ENCODE measurements at regions of chr1 and their contacts with region 1.

Region 1: GRCh38 chr1:115706587-115707425 is 61.7 kb downstream of the CASQ2 start:
- DNase-seq: peak; percentile 30
- H3K4me3 ChIP-seq: no peak overlapping the region
- H3K27ac ChIP-seq: no peak overlapping the region
- H3K4me1 ChIP-seq: peaks cover 5% of the 10 kb centered on the region
- H3K27me3 ChIP-seq: no peaks in the 10 kb centered on the region
- CTCF ChIP-seq: peak; percentile 42 to 70

Region 2: GRCh38 chr1:114467488-114467887 is 1239.3 kb before region 1 on chr1:
- CTCF ChIA-PET with region 1: interaction called, 11 read pairs
- dilution Hi-C with region 1: no loop called
- in situ Hi-C with region 1: no loop called
- intact Hi-C with region 1: no loop called
- DNase-seq: no peak
- H3K4me3 ChIP-seq: no peak overlapping the region
- H3K27ac ChIP-seq: no peak overlapping the region
- H3K4me1 ChIP-seq: peaks cover 18% of the 10 kb centered on the region
- H3K27me3 ChIP-seq: no peaks in the 10 kb centered on the region
- CTCF ChIP-seq: no peak

Region 3: GRCh38 chr1:115642168-115643072 is 64.4 kb before region 1 on chr1:
- CTCF ChIA-PET with region 1: no interaction called
- dilution Hi-C with region 1: no loop called
- in situ Hi-C with region 1: no loop called
- intact Hi-C with region 1: loop called (anchors 2 kb)
- DNase-seq: peak; percentile 70
- H3K4me3 ChIP-seq: peak overlapping the region; percentile 61 to 88 (median 67)
- H3K27ac ChIP-seq: peak overlapping the region; percentile 50
- H3K4me1 ChIP-seq: peaks cover 14% of the 10 kb centered on the region
- H3K27me3 ChIP-seq: no peaks in the 10 kb centered on the region
- CTCF ChIP-seq: peak; percentile 8 to 35

Region 4: DNA sequence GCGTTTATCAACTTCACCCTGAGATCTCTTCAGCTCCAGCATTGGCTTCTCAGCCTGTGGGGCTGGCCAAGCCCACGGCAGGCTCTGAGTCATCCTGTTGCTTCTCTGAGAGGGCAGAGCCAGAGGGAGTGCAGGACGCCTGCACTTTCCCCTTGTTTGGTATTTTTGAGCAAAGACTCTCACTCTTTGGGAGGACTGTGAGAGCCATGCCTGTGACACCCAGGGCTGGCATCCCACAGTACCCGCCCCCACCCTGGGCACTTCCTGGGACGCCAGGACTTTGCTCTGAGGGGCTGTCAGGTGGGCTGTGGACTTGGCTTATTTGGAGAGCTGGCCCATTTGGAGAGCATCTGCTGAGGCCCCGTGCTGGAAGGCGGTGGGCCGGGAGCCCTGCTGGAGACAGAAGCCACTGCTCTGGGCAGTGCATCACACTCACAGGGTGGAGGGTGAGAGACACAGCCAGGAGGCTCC is 27.6 kb before region 1 on chr1:
- CTCF ChIA-PET with region 1: interaction called, 24 read pairs
- dilution Hi-C with region 1: no loop called
- in situ Hi-C with region 1: no loop called
- intact Hi-C with region 1: no loop called
- DNase-seq: peak; percentile 64
- H3K4me3 ChIP-seq: no peak overlapping the region
- H3K27ac ChIP-seq: no peak overlapping the region
- H3K4me1 ChIP-seq: peaks cover 38% of the 10 kb centered on the region
- H3K27me3 ChIP-seq: no peaks in the 10 kb centered on the region
- CTCF ChIP-seq: no peak

Region 5: DNA sequence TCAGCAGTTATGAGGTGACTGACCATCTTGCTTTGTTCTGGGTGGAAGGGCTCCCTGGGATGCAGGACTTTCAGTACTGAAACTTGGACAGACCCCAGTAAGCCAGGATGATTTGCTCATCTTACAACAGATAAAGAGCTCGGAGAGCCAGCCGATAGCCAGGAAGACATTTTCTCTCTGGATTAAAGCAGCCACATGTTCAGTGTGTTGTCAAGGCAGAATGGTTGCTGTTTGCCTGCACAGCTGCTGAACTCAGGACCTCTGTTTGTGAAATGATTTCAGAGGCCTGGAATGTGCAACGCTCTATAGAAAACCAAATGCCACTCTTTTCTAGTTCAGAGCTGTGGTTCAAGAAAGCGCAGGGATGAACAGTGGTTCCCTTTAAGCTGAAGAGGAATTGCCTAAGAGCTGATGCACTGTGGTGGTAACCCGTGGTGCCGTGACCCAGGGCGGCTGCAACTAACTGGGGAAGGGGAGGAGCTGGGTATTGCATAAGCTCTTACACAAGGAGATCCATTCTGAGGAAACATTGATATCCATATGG is 21.0 kb after region 1 on chr1:
- CTCF ChIA-PET with region 1: no interaction called
- dilution Hi-C with region 1: no loop called
- in situ Hi-C with region 1: no loop called
- intact Hi-C with region 1: no loop called
- DNase-seq: peak; percentile 94
- H3K4me3 ChIP-seq: no peak overlapping the region
- H3K27ac ChIP-seq: no peak overlapping the region
- H3K4me1 ChIP-seq: no peaks in the 10 kb centered on the region
- H3K27me3 ChIP-seq: no peaks in the 10 kb centered on the region
- CTCF ChIP-seq: no peak

Region 6: DNA sequence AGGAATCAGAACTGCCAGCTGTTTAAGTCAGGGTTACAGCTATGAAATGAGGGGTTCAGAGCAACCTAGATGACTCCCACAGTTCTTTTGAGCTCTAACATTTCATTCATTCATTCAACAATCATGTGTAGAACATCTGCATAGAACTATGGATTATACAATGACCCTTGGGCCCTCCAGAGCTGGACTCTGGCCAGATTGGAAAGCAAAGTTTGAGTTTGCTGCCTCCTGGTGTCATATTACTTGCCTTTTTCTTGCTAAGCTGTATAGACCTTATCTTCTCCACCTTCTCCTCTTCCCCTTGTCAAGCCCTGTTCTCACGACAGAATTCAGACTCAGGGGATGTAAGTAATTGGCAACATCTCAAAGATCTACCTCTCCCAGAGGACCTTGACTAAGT is 57.7 kb after region 1 on chr1:
- CTCF ChIA-PET with region 1: interaction called, 3 read pairs
- dilution Hi-C with region 1: loop called (anchors 5 kb)
- in situ Hi-C with region 1: no loop called
- intact Hi-C with region 1: loop called (anchors 2 kb)
- DNase-seq: peak; percentile 42
- H3K4me3 ChIP-seq: no peak overlapping the region
- H3K27ac ChIP-seq: no peak overlapping the region
- H3K4me1 ChIP-seq: no peaks in the 10 kb centered on the region
- H3K27me3 ChIP-seq: no peaks in the 10 kb centered on the region
- CTCF ChIP-seq: peak; percentile 67 to 69

Region 7: DNA sequence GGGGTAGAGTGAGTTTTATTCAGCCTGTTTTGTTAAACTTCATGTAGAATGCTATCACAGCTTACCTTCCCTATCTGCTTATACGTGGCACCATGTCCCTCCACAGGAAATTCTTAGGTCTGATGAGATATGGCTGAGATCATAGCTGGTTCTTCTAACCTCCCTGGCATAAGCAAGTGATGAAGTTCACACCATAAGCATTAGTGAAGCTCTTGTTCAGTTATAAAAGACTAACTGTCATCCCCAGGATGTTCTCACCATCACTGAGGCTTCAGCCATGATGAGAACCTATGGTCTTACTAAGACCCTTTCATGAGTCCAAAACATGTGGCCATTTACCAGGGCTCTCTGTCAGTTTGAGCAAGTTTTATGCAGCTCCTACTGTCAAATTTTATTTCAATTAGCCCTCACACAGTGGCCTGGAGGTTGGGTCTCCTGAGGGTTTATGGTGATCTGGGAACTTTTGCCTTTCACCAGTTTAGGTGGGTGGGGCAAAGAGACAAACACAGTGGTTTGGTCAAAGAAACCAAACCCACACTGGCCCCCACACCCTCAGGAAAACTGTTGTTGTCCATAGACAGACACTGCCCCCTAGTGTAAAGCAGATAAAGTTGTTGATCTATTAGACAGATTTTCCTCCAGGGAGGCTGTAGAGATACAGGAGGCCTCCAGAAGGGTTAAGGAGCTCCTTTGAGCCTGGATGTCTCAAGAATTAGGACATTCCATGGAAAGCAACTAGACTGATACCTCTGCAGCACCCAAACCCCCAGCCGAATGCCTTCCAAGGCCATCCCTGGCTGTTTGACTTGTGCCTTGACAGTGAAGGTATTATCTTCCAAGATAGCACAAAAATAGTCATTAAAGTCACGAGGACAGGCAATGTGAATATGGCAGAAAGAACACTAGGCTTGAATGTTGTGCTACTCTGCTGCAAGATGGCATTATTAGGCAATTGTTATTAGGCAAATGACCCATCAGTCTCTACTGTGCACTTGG is 274.5 kb after region 1 on chr1:
- CTCF ChIA-PET with region 1: no interaction called
- dilution Hi-C with region 1: no loop called
- in situ Hi-C with region 1: no loop called
- intact Hi-C with region 1: loop called (anchors 5 kb)
- DNase-seq: peak; percentile 51
- H3K4me3 ChIP-seq: no peak overlapping the region
- H3K27ac ChIP-seq: peak overlapping the region; percentile 9
- H3K4me1 ChIP-seq: peaks cover 29% of the 10 kb centered on the region
- H3K27me3 ChIP-seq: no peaks in the 10 kb centered on the region
- CTCF ChIP-seq: peak; percentile 54 to 69

Measured in mammary epithelial cell (primary cell).